Upper lobe of right lung (tissue), 1 donor: ENCODE measurements at regions of chr9 and their contacts with region 1.

Region 1: DNA sequence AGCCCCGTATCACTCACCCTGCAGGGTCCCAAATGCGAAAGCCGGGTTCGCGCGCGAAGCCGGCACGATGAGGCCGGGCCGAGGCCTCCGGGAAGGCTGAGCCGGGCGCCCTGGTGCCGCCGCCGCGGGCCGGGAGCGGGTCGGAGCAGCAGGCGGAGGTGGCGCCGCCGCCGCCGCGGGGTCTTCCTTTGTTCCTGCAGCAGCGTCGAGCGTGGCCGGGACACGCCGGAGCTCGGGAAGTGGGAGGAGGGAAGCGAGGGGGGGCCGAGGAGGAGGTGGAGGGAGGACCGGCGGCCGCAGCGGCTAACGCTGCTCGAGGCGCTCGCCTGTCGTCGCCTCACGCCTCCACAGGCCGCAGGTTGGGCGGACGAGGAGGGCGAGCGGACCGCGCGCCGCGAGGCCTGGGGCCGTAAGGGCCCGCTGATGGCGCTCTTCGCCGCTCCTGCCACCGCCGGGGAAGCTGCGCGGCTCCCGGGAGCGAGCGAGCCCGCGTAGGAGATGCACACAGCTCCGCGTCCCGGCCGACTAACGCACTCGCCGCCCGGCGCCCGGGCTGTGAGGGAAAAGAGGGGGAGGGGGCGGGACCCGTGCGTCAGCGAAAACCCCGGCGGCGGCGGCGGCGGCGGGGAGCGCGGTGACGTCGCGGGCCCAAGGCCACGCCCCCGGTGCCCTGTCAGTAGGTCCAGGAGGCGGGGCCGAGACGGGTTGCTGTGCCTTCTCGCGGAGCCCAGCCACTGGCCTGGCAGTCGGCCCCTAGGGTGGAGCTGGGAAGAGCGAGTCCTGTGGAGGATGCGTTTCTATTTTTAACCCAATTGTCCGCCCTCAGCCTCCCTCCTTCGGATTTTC is at the start of gene ZFAND5:
- DNase-seq: peak; percentile 99
- ATAC-seq: peak; percentile 93
- H3K4me3 ChIP-seq: peak within 1 kb of the TSS; percentile 82
- H3K27ac ChIP-seq: peak within 1 kb of the TSS; percentile 97
- H3K4me1 ChIP-seq: peaks cover 24% of the 10 kb centered on the region
- H3K27me3 ChIP-seq: no peaks in the 10 kb centered on the region
- CTCF ChIP-seq: no peak
- total RNA-seq, gene ZFAND5: 204 TPM

Region 2: GRCh38 chr9:72305102-72305546 is 59.8 kb before region 1 on chr9:
- intact Hi-C with region 1: loop called (anchors 10 kb)
- DNase-seq: peak; percentile 89
- ATAC-seq: peak; percentile 99
- H3K4me3 ChIP-seq: peak overlapping the region; percentile 55
- H3K27ac ChIP-seq: peak overlapping the region; percentile 93
- H3K4me1 ChIP-seq: peaks cover 21% of the 10 kb centered on the region
- H3K27me3 ChIP-seq: no peaks in the 10 kb centered on the region
- CTCF ChIP-seq: no peak